Calu3 (cell line): ENCODE measurements at regions of chr14 and their contacts with region 1.

Region 1: DNA sequence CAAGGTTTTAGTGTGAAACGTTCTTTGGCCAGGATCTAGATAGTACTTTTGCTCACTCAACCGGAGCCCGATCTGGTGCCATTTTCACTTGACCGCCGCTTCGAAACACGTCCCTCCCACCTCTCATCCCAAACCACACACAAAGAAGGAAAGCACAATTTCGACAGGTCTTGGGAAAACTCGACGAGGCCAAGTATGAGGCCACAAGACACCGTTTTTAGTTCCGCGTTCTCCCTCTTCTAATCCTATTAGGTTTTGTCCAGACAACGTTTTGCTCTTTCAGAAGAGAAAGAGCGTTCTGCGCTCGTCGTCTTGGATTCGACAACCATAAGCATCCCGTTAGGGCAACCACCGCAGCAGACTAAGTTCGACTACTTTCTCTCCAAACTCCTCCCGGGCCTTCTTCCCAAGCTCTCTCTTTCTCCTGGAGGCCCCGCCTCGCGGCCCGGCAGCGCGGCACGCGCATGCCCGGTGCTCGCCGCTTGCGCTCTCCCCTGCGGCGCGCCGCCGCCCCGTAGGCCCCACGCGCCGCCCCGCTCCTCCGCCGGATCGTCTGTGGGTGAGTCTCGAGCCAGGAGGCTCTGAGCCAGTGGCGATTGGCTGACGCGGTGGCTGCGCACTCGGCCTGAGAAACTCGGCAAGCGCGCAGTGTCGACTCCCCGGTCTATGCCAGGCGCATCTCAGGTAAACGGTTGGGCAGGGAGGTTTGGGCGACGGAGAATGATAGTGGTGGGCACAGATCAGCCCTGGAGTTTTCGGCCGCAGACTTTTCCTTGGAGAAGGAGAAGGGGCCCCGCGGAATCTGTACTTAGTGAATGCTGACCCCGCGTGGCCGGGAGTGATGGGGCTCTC is at the start of gene MIPOL1:
- DNase-seq: peak; percentile 85
- H3K4me3 Mint-ChIP-seq: peak within 1 kb of the TSS; percentile 94
- H3K27ac Mint-ChIP-seq: peak within 1 kb of the TSS; percentile 97
- H3K4me1 Mint-ChIP-seq: peaks cover 44% of the 10 kb centered on the region
- H3K27me3 Mint-ChIP-seq: no peaks in the 10 kb centered on the region
- CTCF ChIP-seq: no peak
- total RNA-seq, gene MIPOL1: 22.0 and 27.2 TPM in 2 replicates

Region 2: DNA sequence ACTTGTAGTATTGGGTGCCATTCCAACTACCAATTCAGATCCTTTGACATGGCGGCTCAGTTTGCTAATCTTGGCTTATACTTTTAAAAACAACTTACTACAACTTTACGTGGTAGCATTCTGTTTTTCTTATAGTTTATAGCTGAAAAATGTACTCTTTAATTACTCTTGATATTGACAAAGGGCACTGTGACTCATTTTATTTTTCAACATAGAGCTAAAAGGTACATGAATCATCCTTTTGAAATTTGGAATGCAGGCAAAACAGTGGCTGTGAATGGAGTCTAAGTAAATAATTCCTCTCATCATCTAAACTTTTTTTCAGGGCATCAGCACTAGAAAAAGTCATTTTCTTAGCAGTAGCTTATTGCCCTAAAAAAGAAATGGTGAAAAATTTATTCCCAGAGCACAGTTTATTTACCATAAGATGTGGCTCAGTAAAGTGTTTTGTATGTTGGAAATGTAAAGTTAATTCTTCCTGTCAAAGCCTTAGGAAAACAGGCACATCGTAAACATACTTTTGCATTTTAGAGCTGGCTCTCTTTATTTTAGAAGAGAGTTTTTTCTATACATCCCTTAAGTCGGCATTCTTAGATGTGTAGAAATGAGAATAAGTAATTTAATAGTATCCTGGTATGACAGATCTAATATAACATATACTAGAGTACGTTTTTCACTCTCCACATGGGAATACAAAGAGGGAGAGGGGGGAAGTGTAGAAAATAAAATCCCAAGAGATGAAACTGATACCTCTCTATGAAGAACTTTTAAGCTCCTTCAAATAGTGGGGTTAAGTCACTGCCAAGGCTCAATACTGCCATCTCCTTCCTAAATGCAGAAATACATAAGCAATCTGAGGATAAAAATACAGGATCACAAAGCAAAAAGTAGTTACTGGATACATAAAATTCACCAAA is 80.5 kb before region 1 on chr14:
- CTCF ChIA-PET with region 1: no interaction called
- intact Hi-C with region 1: no loop called
- DNase-seq: no peak
- H3K4me3 Mint-ChIP-seq: no peak overlapping the region
- H3K27ac Mint-ChIP-seq: no peak overlapping the region
- H3K4me1 Mint-ChIP-seq: peaks cover 8% of the 10 kb centered on the region
- H3K27me3 Mint-ChIP-seq: no peaks in the 10 kb centered on the region
- CTCF ChIP-seq: peak; percentile 20

Region 3: DNA sequence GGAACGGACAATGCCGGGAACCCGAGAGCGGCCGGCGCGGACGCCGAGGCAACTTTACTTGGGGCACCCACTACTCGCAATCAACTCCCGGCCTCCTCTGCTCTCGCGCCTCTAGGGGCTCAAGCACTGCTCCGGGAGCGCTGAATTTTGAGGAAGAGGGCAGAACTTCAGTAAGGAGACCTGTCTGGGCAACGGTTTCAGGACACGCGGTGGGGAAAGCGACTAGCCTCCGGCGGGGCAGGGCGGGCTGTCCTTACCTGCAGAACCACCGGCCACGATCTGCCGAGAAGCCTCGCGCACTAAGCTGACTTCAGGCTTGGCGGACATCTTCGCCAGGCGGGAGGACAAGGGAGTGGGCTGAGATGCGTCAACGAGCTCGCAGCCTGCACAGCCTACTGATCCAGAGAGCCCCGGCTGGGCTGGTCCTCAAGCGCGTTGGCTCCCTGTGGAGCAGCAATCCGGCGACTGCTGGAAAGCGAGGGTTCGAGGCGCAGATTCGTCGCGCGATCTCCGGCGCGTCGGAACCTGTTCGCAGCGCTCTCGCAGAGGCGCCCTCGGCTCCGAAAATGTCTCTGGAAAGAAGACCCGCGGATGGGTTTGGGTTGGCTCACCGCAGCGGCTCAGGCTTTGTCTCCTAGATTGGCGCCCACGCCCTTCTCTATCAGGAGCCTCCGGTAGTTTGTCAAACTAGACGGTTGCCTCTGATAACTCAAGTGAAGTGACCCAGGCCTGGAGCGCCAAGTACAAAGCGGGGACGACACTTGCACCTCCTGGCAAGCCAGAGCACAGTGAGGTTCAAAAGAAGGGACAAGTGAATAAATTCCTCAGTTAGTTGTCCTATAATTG is 25.4 kb before region 1 on chr14 and contains the start of gene SLC25A21:
- CTCF ChIA-PET with region 1: no interaction called
- intact Hi-C with region 1: loop called (anchors 2 kb)
- DNase-seq: peak; percentile 84
- H3K4me3 Mint-ChIP-seq: peak within 1 kb of the TSS; percentile 85
- H3K27ac Mint-ChIP-seq: peak within 1 kb of the TSS; percentile 90
- H3K4me1 Mint-ChIP-seq: no peaks in the 10 kb centered on the region
- H3K27me3 Mint-ChIP-seq: no peaks in the 10 kb centered on the region
- CTCF ChIP-seq: no peak
- total RNA-seq, gene SLC25A21: 1.2 and 1.4 TPM in 2 replicates